Activated CD4-positive, alpha-beta memory T cell treated with anti-CD3 and anti-CD28 coated beads for 36 hours (primary cell): ENCODE measurements at regions of chr17 and their contacts with region 1.

Region 1: DNA sequence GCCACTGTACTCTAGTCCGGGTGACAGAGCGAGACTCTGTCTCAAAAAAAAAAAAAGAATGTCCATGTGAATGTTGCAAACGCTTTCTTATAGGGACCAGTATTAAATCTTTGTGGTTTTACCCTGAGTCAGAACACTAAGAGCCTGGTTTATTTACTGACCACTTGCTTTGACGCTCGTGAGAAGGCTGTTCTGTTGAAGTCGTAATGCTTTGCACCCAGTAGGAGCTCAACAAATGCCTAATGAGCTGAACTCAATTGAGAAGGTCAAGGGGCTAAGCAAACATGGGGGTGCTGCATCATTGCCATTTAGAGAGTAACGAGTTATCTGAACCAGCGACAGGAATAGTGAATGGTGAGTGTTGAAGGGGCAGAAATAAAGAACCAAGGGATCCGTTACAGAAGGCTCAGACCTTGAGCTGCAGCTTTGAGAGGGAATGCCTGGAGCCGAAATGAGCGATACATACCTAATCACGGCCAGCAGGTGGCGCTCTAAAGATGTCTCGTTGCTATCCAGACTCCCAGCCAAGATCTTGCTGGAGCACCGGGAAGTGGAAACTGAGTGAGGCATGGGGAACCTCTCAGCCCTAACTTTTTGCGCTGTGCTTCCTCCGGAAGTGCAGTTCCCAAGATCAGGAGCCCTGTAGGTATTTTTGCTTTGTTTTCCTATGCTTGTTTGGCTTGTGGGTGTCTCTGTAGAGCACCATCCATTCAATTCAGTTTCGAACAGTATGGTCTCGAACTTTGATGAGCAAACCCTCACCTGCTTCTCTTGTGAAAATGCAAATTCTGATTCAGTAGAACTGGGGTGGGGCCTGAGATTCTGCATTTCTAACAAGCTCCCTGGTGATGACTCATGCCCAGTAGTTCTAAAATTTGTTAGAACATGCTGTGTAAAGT is 12.6 kb upstream of the RNF222 start:
- DNase-seq: peak; percentile 86
- H3K4me3 Mint-ChIP-seq: peak overlapping the region; percentile 40
- H3K27ac Mint-ChIP-seq: peak overlapping the region; percentile 61
- H3K4me1 Mint-ChIP-seq: peaks cover 22% of the 10 kb centered on the region
- H3K27me3 Mint-ChIP-seq: peaks cover 9% of the 10 kb centered on the region

Region 2: DNA sequence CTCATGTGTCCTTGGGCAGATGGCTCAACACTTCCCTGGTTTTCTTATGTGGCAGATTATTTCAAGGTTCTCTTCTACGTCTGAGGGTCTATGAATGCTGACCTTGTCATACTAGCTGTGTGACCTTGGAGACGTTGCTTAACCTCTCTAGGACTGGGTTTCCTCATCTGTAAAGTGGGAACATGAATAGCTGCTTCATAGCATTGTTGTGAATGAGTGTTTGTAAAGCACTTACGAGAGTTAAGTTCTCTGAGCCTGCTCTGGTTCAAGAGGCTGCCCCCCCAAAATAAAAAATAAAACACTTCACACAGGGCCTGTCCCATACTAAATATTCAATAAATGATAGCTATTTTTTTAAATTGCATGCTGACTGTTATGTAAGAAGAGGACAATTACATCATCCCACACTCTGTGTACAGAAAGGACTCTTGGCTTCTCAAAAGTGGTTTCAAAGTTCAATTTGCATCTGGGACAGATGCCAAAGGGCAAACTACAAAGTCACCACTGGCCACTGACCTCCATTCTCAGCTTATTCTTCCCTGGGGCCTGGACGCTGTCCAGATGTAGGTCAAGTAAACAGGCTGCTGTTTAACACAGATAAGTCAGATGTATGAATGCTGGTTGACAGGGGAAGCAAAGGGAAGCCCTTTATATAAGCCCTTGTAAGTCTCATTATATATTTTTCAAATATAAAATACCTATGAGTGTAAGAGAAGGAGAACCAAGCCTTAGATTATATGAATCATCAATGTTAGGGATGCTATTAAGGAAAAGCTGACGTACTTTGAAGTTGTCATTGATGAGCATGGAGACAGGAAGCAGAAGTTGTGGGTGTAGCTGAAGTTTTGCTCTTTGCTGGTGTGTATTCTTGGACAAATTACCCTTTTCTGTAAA is 10.1 kb after region 1 on chr17:
- CTCF ChIA-PET with region 1: interaction called, 24 read pairs
- POLR2A ChIA-PET with region 1: no interaction called
- intact Hi-C with region 1: no loop called
- DNase-seq: no peak
- H3K4me3 Mint-ChIP-seq: no peak overlapping the region
- H3K27ac Mint-ChIP-seq: no peak overlapping the region
- H3K4me1 Mint-ChIP-seq: no peaks in the 10 kb centered on the region
- H3K27me3 Mint-ChIP-seq: peaks cover 30% of the 10 kb centered on the region

Region 3: DNA sequence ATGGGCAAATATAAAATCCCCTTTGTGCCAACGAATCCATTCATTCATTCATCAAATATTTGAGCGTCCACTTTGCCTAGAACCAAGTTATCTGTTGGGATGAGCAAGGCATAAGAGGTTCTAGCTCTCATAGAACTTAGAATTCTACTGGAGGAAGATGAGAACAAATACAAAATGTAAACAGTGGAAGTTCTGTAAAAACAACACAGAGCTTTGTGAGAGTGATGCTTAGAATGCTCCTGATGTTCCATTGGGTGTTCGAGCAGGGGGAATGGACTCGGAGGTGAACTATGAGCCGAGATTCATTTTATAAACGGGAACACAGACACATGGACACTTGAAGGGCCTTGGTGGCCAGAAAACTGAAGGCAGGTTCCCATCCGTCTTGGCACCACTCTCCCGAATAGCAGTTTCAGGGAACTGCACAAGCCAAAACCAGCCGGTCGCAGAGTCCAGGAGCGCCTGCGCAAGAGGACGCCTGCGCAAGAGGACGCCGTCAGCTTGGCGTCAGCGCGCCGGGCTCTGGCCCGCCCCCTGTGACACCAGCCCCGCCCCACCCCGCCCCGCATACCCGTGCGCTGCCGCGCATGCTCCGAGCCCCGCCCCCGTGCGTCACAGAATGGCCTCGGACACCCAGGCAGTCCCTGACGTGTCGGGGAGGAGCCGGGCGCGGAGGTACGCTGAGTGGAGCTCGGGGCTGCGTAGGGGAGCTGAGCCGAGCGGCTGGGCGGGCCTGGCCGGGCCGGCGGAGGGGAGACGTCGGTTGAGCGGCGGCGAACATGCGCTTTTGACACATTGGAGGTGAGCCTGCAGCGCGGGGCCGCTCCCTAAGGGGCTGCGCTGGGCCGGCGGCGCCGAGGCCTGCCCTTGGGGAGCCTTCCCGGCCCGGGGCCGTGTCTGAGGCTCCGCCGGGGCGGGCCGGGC is 25.3 kb after region 1 on chr17 and contains the start of gene NDEL1:
- CTCF ChIA-PET with region 1: interaction called, 31 read pairs
- POLR2A ChIA-PET with region 1: no interaction called
- intact Hi-C with region 1: no loop called
- DNase-seq: peak; percentile 99
- H3K4me3 Mint-ChIP-seq: peak within 1 kb of the TSS; percentile 92
- H3K27ac Mint-ChIP-seq: peak within 1 kb of the TSS; percentile 91
- H3K4me1 Mint-ChIP-seq: peaks cover 31% of the 10 kb centered on the region
- H3K27me3 Mint-ChIP-seq: no peaks in the 10 kb centered on the region
- total RNA-seq, gene NDEL1: 58.0 to 62.8 TPM

Region 4: GRCh38 chr17:8745586-8746500 is 335.6 kb after region 1 on chr17:
- CTCF ChIA-PET with region 1: interaction called, 63 read pairs
- POLR2A ChIA-PET with region 1: interaction called, 3 read pairs
- intact Hi-C with region 1: loop called (anchors 1 kb)
- DNase-seq: peak; percentile 84
- H3K4me3 Mint-ChIP-seq: peak overlapping the region; percentile 80
- H3K27ac Mint-ChIP-seq: peak overlapping the region; percentile 74
- H3K4me1 Mint-ChIP-seq: peaks cover 9% of the 10 kb centered on the region
- H3K27me3 Mint-ChIP-seq: no peaks in the 10 kb centered on the region

Region 5: GRCh38 chr17:8785547-8786413 is 375.6 kb after region 1 on chr17:
- CTCF ChIA-PET with region 1: interaction called, 36 read pairs
- POLR2A ChIA-PET with region 1: no interaction called
- intact Hi-C with region 1: no loop called
- DNase-seq: peak; percentile 77
- H3K4me3 Mint-ChIP-seq: no peak overlapping the region
- H3K27ac Mint-ChIP-seq: no peak overlapping the region
- H3K4me1 Mint-ChIP-seq: peaks cover 2% of the 10 kb centered on the region
- H3K27me3 Mint-ChIP-seq: peaks cover under 1% of the 10 kb centered on the region